Sigmoid colon (tissue), 7 donors: ENCODE measurements at regions of chr9 and their contacts with region 1.

Region 1: GRCh38 chr9:99819856-99820684 is 1.6 kb upstream of the NR4A3 start:
- DNase-seq: peak; percentile 98
- H3K4me3 ChIP-seq: peak overlapping the region; percentile 82 to 89 (median 86)
- H3K27ac ChIP-seq: peak overlapping the region; percentile 98 to 100 (median 98)
- H3K4me1 ChIP-seq: peaks cover 0 to 46% (median 26%) of the 10 kb centered on the region in 4 donors
- H3K27me3 ChIP-seq: peaks cover 0 to 5% (median 0%) of the 10 kb centered on the region in 3 donors
- CTCF ChIP-seq: peak in 1 of 4 experiments; percentile 13
- EP300 ChIP-seq: peak; percentile 99 to 100 (median 99)
- POLR2A ChIP-seq: peak; percentile 30 to 53

Region 2: DNA sequence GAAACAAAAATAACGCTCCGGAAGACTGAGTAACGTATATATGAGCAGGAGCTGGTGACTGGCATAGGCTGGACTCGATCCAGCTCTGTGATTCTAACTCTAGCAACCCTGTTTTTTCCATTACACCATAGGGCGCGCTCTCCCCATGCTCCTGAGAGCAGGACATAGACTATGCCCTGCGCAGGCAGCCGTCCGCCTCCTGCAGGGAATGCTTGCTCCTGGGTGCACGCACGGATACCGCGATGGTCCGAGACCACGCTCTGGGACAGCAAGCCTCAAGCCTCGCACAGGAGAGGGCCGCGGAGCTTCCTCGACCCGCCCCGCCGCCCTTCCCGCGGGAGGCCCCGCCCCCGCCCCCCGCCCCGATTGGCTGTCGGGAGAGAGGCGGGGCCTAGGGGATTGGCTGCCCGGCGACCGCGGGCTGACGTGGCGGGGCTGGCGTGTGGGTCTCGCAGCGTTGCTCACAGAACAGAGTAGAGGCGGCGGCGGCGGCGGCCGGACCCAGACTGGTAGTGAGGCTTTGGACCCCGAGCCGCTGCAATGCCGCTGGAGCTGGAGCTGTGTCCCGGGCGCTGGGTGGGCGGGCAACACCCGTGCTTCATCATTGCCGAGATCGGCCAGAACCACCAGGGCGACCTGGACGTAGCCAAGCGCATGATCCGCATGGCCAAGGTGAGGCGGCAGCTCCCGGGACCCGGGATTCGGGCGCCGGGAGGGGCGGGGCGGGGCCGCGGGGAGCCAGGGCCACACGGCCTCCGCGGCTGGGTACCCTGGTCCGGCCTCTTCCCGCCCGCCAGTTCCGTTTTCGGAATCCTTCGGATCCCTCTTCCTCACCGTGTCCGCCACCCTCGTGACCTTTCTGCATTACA is 1763.6 kb before region 1 on chr9 and contains the start of gene NANS:
- intact Hi-C with region 1: loop called (anchors 10 kb)
- DNase-seq: peak; percentile 97
- H3K4me3 ChIP-seq: peak within 1 kb of the TSS; percentile 78 to 95 (median 82)
- H3K27ac ChIP-seq: peak within 1 kb of the TSS; percentile 95 to 98 (median 96)
- H3K4me1 ChIP-seq: peaks cover 0 to 20% (median 9%) of the 10 kb centered on the region in 4 donors
- H3K27me3 ChIP-seq: no peaks in the 10 kb centered on the region
- CTCF ChIP-seq: no peak
- EP300 ChIP-seq: no peak
- POLR2A ChIP-seq: peak; percentile 73 to 92
- total RNA-seq, gene NANS: 24.6 to 38.1 (median 28.4) TPM

Region 3: GRCh38 chr9:98807070-98807810 is 1012.8 kb before region 1 on chr9 and contains the start of gene GALNT12:
- intact Hi-C with region 1: loop called (anchors 5 kb)
- DNase-seq: peak; percentile 71
- H3K4me3 ChIP-seq: peak within 1 kb of the TSS; percentile 42 to 64 (median 62)
- H3K27ac ChIP-seq: peak within 1 kb of the TSS; percentile 83 to 90 (median 86)
- H3K4me1 ChIP-seq: peaks cover 0 to 68% (median 51%) of the 10 kb centered on the region in 4 donors
- H3K27me3 ChIP-seq: no peaks in the 10 kb centered on the region
- CTCF ChIP-seq: no peak
- EP300 ChIP-seq: no peak
- POLR2A ChIP-seq: no peak
- total RNA-seq, gene GALNT12: 11.5 to 18.9 (median 15.7) TPM

Region 4: DNA sequence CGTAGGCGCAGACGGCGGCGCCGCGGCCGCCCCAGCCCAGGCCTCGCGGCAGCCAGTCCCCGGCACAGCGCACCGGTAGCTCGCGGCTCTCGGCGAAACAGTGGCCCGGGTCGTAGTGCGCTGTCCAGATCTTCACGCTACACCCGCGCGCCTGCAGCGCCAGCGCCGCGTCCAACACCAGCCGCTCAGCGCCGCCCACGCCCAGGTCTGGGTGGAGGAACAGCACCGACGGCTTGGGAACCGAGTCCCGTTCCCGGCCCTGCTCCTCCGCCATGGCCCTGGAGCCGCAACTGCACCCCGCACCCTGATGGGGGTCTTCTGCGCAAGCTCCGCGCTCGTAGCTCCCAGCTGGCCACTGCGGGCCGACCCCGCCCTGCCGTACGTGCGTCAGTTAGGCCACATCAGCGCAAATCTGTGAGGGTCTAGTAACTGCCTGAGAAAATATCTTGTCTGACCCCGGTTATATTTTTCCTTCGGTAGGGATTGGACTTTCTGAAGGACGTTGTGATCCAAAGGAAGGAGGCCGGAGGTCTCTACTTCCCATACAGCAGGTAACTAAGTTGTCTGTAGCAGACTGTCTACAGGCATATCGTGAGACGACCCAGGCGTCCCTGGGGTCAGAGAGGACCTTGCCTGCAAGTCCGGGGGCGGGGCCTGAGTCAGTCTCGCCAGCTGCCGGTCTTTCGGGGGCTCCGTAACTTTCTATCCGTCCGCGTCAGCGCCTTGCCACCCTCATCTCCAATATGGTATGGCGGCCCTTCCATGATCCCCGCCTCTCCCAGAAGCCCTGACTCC is 598.3 kb before region 1 on chr9 and contains the starts of genes ALG2 and SEC61B:
- intact Hi-C with region 1: loop called (anchors 5 kb)
- DNase-seq: peak; percentile 96
- H3K4me3 ChIP-seq: peak within 1 kb of the TSS; percentile 84 to 100 (median 90)
- H3K27ac ChIP-seq: peak within 1 kb of the TSS; percentile 91 to 96 (median 94)
- H3K4me1 ChIP-seq: peaks cover 0 to 69% (median 49%) of the 10 kb centered on the region in 4 donors
- H3K27me3 ChIP-seq: no peaks in the 10 kb centered on the region
- CTCF ChIP-seq: no peak
- EP300 ChIP-seq: peak in 1 of 4 donors; percentile 34
- POLR2A ChIP-seq: peak; percentile 82 to 93
- total RNA-seq, gene ALG2: 15.1 to 25.0 (median 18.8) TPM
- total RNA-seq, gene SEC61B: 37.1 to 70.3 (median 49.9) TPM

Region 5: DNA sequence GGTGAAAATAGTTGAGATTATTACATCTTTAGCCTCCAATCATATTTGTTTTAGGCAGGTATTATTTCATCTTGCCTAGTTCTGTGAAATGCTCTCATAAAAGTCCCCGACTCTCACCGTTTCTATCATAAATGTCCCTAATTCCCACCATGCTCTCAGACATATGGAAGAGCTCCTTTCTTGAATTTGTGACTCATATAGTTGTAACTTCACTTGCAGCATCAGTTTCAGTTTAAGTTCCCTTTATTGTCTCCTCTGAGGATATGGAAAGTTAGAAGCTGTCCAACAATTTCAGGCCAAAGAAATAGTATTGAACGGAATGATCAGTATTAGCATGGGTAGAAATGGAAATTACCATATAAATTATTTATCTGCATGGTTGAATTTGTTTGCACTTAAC is 185.9 kb before region 1 on chr9:
- intact Hi-C with region 1: no loop called
- DNase-seq: no peak
- H3K4me3 ChIP-seq: no peak overlapping the region
- H3K27ac ChIP-seq: no peak overlapping the region
- H3K4me1 ChIP-seq: no peaks in the 10 kb centered on the region
- H3K27me3 ChIP-seq: no peaks in the 10 kb centered on the region
- CTCF ChIP-seq: no peak
- EP300 ChIP-seq: no peak
- POLR2A ChIP-seq: no peak

Region 6: DNA sequence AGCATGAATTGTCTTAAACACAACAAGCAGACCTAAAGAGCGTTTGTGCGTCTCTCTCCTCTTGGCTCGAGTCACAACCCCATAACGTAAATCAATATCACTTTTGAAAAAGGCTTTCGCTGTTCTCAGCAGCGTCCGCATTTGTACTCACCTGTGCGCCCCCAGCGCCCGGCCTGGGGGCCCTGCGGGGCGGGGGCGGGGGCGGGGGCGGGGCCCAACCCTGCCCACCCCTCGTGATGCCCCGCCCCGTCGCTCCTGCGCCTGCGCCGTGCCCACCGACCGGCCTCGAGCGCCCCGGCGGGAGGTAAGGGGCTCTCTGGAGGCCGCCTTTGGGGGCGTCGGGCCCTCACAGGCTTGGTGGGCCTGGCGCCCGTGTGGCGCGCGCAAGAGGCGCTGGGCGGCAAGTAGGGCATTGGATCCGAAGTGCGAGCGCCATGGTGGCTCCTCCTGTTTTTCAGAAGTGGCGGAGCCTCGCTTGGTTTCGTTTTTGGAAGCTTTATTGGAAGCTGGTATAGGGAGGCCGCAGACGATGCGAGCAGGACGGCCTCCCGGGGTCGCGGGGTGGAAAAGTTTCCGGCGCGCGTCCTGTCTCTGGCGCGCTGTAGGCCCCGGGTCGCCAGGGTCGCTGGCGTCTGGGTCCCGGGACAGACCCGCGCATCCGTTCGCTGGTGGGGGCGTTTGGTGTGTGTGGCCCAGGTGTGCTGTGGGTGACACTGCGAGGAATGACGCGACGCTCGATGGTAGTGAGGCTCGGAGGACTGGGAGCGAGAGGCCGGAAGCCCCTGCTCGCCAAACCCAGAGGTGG is 86.5 kb after region 1 on chr9 and contains the start of gene STX17:
- intact Hi-C with region 1: loop called (anchors 2 kb)
- DNase-seq: peak; percentile 81
- H3K4me3 ChIP-seq: peak within 1 kb of the TSS; percentile 79 to 94 (median 81)
- H3K27ac ChIP-seq: peak within 1 kb of the TSS; percentile 95 to 99 (median 96)
- H3K4me1 ChIP-seq: peaks cover 0 to 25% (median 14%) of the 10 kb centered on the region in 4 donors
- H3K27me3 ChIP-seq: no peaks in the 10 kb centered on the region
- CTCF ChIP-seq: no peak
- EP300 ChIP-seq: no peak
- POLR2A ChIP-seq: peak; percentile 62 to 69
- total RNA-seq, gene STX17: 33.4 to 63.7 (median 39.6) TPM

Region 7: DNA sequence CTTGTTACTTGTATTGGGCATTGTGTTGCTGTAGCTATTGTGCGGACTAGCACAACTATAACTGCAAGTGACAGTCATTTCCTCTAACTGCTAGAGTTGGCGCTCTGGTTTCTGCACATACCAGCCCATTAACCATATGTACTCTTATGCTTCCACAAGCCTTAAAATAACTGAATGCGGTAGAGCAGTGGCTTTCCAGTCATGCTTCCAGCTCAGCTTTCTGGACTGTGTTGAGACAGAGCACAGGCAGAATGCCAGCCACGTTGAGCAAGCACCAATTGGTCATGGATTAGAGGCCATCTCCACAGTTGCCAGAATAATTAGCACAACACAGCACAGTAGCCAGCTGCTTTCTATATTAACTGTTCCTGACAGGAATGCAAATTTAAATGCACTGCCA is 291.2 kb after region 1 on chr9:
- intact Hi-C with region 1: no loop called
- DNase-seq: peak; percentile 92
- H3K4me3 ChIP-seq: no peak overlapping the region
- H3K27ac ChIP-seq: peak overlapping the region in 3 of 4 donors; percentile 17 to 64 (median 46)
- H3K4me1 ChIP-seq: peaks cover 0 to 15% (median 13%) of the 10 kb centered on the region in 4 donors
- H3K27me3 ChIP-seq: no peaks in the 10 kb centered on the region
- CTCF ChIP-seq: no peak
- EP300 ChIP-seq: no peak
- POLR2A ChIP-seq: no peak

Region 8: DNA sequence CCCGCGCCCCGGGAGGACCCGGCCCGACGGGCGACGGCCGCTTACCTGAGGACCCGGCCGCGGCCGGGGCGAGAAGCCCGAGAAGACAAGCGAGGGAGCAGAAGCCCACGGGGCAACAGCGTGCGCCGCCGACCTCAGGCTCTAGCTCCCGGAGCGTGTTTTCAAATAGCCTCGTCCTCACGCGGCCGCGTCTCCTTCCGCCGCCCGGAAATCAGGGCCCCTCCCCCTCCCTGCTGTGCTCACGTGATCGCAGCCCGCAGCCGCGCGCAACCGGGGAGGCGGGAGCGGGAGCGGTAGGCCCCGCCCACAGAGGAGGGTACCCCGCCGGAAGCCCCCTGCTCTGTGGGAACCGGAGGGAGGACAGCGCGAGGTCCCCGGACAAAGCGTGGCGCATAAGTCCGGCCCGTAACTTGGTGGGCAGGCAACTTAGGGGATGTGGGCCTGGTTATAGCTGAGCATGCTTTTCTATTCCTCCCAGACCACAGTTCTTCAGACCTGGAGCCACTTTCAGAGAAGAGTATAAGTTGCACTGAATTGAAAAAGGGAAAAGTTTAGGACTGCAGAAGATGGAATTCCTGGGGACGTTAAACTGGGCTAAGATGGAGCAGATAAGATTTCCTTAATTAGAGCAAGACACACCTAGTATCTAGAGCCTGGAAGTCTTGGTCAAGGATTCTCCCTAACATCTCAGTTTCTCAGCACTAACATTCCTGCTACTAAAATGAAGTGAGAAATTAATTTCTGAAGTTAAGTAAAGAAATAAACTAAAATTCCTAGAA is 532.8 kb after region 1 on chr9 and contains the start of gene TEX10:
- intact Hi-C with region 1: loop called (anchors 10 kb)
- DNase-seq: peak; percentile 93
- H3K4me3 ChIP-seq: peak within 1 kb of the TSS; percentile 82 to 99 (median 98)
- H3K27ac ChIP-seq: peak within 1 kb of the TSS; percentile 87 to 91 (median 90)
- H3K4me1 ChIP-seq: peaks cover 0 to 25% (median 12%) of the 10 kb centered on the region in 4 donors
- H3K27me3 ChIP-seq: no peaks in the 10 kb centered on the region
- CTCF ChIP-seq: no peak
- EP300 ChIP-seq: peak in 1 of 4 donors; percentile 57
- POLR2A ChIP-seq: peak in 1 of 2 donors; percentile 37
- total RNA-seq, gene TEX10: 15.0 to 19.6 (median 17.1) TPM

Region 9: GRCh38 chr9:101398068-101398929 is 1578.2 kb after region 1 on chr9 and contains the starts of genes MRPL50 and ZNF189:
- intact Hi-C with region 1: loop called (anchors 5 kb)
- DNase-seq: peak; percentile 99
- H3K4me3 ChIP-seq: peak within 1 kb of the TSS; percentile 57 to 77 (median 66)
- H3K27ac ChIP-seq: peak within 1 kb of the TSS; percentile 82 to 92 (median 88)
- H3K4me1 ChIP-seq: peaks cover 0 to 50% (median 37%) of the 10 kb centered on the region in 4 donors
- H3K27me3 ChIP-seq: no peaks in the 10 kb centered on the region
- CTCF ChIP-seq: no peak
- EP300 ChIP-seq: peak in 1 of 4 donors; percentile 9
- POLR2A ChIP-seq: peak; percentile 39 to 68
- total RNA-seq, gene MRPL50: 10.0 to 15.3 (median 12.3) TPM
- total RNA-seq, gene ZNF189: 21.2 to 26.0 (median 24.1) TPM